CD8-positive, alpha-beta T cell (primary cell): ENCODE measurements at regions of chr14 and their contacts with region 1.

Region 1: GRCh38 chr14:91060351-91061055 is at the start of gene RPS6KA5:
- DNase-seq: peak; percentile 99 to 100 (median 100)
- ATAC-seq: peak; percentile 82
- H3K4me3 ChIP-seq: peak within 1 kb of the TSS; percentile 66 to 84
- H3K4me3 Mint-ChIP-seq: peak within 1 kb of the TSS; percentile 81
- H3K27ac ChIP-seq: peak within 1 kb of the TSS; percentile 94 to 96
- H3K27ac Mint-ChIP-seq: peak within 1 kb of the TSS; percentile 35
- H3K4me1 ChIP-seq: peaks cover 38% of the 10 kb centered on the region
- H3K4me1 Mint-ChIP-seq: peaks cover 55% of the 10 kb centered on the region
- H3K27me3 ChIP-seq: no peaks in the 10 kb centered on the region
- H3K27me3 Mint-ChIP-seq: no peaks in the 10 kb centered on the region
- CTCF ChIP-seq: no peak
- total RNA-seq, gene RPS6KA5: 17.7 to 18.3 TPM

Region 2: DNA sequence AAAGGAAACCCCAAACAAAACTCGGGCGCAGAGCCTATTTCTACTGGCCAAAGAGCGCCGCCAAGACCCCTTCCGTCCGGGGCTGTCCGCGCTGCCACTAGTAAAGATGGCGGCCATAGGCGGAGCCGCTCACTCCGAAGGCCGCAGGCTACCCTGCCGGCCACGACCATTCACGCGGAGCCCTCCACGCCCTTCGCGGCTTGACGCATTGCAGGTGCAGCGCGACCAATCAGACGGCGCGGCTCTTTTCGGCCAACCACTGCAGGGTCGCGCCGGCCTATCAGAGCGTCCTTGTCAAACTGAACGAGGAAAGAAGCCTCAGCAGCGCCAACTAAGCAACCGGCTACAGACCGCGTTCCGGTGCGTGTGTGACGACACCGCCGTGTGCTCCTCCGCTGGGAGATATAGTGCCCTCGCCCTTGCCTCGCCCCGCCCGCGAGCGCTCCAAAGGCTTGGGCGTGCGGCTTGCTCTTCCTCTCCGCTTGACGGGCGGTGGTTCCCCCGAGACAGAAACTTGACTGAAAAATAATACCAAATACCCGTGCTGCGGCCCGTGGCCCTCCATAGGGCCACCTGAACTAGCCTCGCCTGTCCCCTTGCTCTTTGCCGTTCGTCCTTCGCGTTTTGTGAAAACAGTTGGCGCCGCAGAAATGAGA is 677.3 kb before region 1 on chr14:
- CTCF ChIA-PET with region 1: no interaction called
- POLR2A ChIA-PET with region 1: no interaction called
- intact Hi-C with region 1: loop called in 1 of 2 experiments (anchors 10 kb)
- DNase-seq: peak; percentile 94 to 99 (median 97)
- ATAC-seq: peak; percentile 77
- H3K4me3 ChIP-seq: peak overlapping the region; percentile 88 to 90
- H3K4me3 Mint-ChIP-seq: no peak overlapping the region
- H3K27ac ChIP-seq: peak overlapping the region; percentile 99 to 100
- H3K27ac Mint-ChIP-seq: no peak overlapping the region
- H3K4me1 ChIP-seq: peaks cover 23% of the 10 kb centered on the region
- H3K4me1 Mint-ChIP-seq: peaks cover 28% of the 10 kb centered on the region
- H3K27me3 ChIP-seq: no peaks in the 10 kb centered on the region
- H3K27me3 Mint-ChIP-seq: no peaks in the 10 kb centered on the region
- CTCF ChIP-seq: no peak

Region 3: DNA sequence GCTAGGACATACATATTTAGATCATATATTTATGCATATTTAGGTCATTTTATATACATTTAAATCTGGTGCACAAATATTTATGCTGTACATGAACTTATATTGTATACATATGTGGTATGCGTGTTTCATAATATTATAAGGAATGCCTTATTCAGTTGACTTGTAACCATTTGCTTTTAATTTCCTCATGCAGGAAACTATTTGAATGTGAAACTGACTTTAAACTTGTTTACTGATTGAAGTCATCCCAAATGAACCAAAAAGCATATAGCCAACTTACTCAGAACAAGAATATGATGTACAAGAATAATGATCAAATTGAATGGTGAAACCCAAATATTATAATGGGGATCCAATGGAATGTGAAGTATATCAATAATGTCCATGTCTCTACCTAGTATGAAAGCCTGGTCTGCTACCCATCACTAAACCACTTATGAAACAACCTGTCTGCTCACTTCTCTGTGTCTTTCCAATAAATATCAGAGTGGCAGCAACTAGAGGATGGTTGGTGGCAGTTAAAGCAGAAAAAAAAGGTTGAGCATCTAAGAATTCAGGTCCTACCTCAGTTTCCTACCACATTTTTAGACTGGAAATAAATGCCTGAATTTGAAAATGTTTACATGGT is 38.4 kb before region 1 on chr14:
- CTCF ChIA-PET with region 1: no interaction called
- POLR2A ChIA-PET with region 1: interaction called, 5 read pairs
- intact Hi-C with region 1: loop called in 1 of 2 experiments (anchors 2 kb)
- DNase-seq: no peak
- ATAC-seq: peak; percentile 36
- H3K4me3 ChIP-seq: peak overlapping the region; percentile 29 to 51
- H3K4me3 Mint-ChIP-seq: peak overlapping the region; percentile 80
- H3K27ac ChIP-seq: peak overlapping the region; percentile 56 to 84
- H3K27ac Mint-ChIP-seq: peak overlapping the region; percentile 89
- H3K4me1 ChIP-seq: peaks cover 9% of the 10 kb centered on the region
- H3K4me1 Mint-ChIP-seq: peaks cover 30% of the 10 kb centered on the region
- H3K27me3 ChIP-seq: no peaks in the 10 kb centered on the region
- H3K27me3 Mint-ChIP-seq: no peaks in the 10 kb centered on the region
- CTCF ChIP-seq: no peak

Region 4: GRCh38 chr14:91078095-91078737 is 17.7 kb after region 1 on chr14:
- CTCF ChIA-PET with region 1: interaction called, 8 read pairs
- POLR2A ChIA-PET with region 1: interaction called, 9 read pairs
- intact Hi-C with region 1: loop called (anchors 1 kb)
- DNase-seq: peak in 6 of 9 experiments; percentile 22 to 86 (median 57)
- ATAC-seq: peak; percentile 98
- H3K4me3 ChIP-seq: peak overlapping the region in 1 of 2 experiments; percentile 8
- H3K4me3 Mint-ChIP-seq: peak overlapping the region; percentile 59
- H3K27ac ChIP-seq: peak overlapping the region in 1 of 2 experiments; percentile 9
- H3K27ac Mint-ChIP-seq: peak overlapping the region; percentile 84
- H3K4me1 ChIP-seq: peaks cover 25% of the 10 kb centered on the region
- H3K4me1 Mint-ChIP-seq: peaks cover 30% of the 10 kb centered on the region
- H3K27me3 ChIP-seq: no peaks in the 10 kb centered on the region
- H3K27me3 Mint-ChIP-seq: no peaks in the 10 kb centered on the region
- CTCF ChIP-seq: no peak

Region 5: DNA sequence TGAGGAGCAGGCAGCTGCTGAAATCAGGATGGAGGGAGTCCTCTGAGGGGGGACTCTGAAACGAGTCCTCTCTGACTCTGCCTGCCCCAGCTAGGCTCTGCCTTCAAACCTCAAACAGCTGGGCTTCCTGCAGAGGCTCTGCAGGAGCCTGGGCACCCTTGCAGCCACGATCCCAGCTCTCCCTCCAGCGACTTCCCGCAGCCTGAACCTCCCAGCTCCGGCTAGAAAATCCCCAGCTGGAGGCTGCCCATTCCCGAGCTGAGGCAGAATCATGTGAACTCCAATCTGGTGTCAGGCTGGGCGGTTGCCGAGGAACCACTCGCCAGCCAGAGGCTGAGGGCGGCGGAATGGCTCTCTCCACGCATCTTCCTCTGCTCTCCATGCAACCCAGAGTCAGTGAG is 184.0 kb after region 1 on chr14 and contains the start of gene GPR68:
- CTCF ChIA-PET with region 1: no interaction called
- POLR2A ChIA-PET with region 1: interaction called, 4 read pairs
- intact Hi-C with region 1: loop called in 1 of 2 experiments (anchors 2 kb)
- DNase-seq: peak in 5 of 9 experiments; percentile 38 to 69 (median 48)
- ATAC-seq: no peak
- H3K4me3 ChIP-seq: peak within 1 kb of the TSS; percentile 49 to 56
- H3K4me3 Mint-ChIP-seq: peak within 1 kb of the TSS; percentile 87
- H3K27ac ChIP-seq: peak within 1 kb of the TSS; percentile 68 to 92
- H3K27ac Mint-ChIP-seq: peak within 1 kb of the TSS; percentile 94
- H3K4me1 ChIP-seq: peaks cover 64% of the 10 kb centered on the region
- H3K4me1 Mint-ChIP-seq: peaks cover 89% of the 10 kb centered on the region
- H3K27me3 ChIP-seq: no peaks in the 10 kb centered on the region
- H3K27me3 Mint-ChIP-seq: no peaks in the 10 kb centered on the region
- CTCF ChIP-seq: no peak
- total RNA-seq, gene GPR68: 3.6 to 5.1 TPM

Region 6: GRCh38 chr14:92039719-92040430 is 979.4 kb after region 1 on chr14 and contains the start of gene TRIP11:
- CTCF ChIA-PET with region 1: no interaction called
- POLR2A ChIA-PET with region 1: no interaction called
- intact Hi-C with region 1: loop called in 1 of 2 experiments (anchors 10 kb)
- DNase-seq: peak; percentile 93 to 97 (median 95)
- ATAC-seq: peak; percentile 86
- H3K4me3 ChIP-seq: peak within 1 kb of the TSS; percentile 86 to 93
- H3K4me3 Mint-ChIP-seq: peak within 1 kb of the TSS; percentile 95
- H3K27ac ChIP-seq: peak within 1 kb of the TSS; percentile 94 to 96
- H3K27ac Mint-ChIP-seq: peak within 1 kb of the TSS; percentile 100
- H3K4me1 ChIP-seq: peaks cover 34% of the 10 kb centered on the region
- H3K4me1 Mint-ChIP-seq: peaks cover 51% of the 10 kb centered on the region
- H3K27me3 ChIP-seq: no peaks in the 10 kb centered on the region
- H3K27me3 Mint-ChIP-seq: no peaks in the 10 kb centered on the region
- CTCF ChIP-seq: no peak
- total RNA-seq, gene TRIP11: 25.3 to 26.5 TPM